ENCODE measurements at regions of chr7 and their contacts with region 1.

Region 1: GRCh38 chr7:122651451-122651850 is 47.5 kb downstream of the RNF133 start:
- DNase-seq: no peak
- ATAC-seq: no peak
- H3K4me3 ChIP-seq: no peak overlapping the region
- H3K27ac ChIP-seq: no peak overlapping the region
- H3K4me1 ChIP-seq: peaks cover 0 to 6% (median 0%) of the 10 kb centered on the region in 12 donors
- H3K27me3 ChIP-seq: no peaks in the 10 kb centered on the region
- CTCF ChIP-seq: no peak
- POLR2A ChIP-seq: no peak

Region 2: GRCh38 chr7:122454776-122455507 is 196.5 kb before region 1 on chr7:
- intact Hi-C with region 1: no loop called
- DNase-seq: no peak
- ATAC-seq: no peak
- H3K4me3 ChIP-seq: no peak overlapping the region
- H3K27ac ChIP-seq: no peak overlapping the region
- H3K4me1 ChIP-seq: no peaks in the 10 kb centered on the region
- H3K27me3 ChIP-seq: no peaks in the 10 kb centered on the region
- CTCF ChIP-seq: no peak
- POLR2A ChIP-seq: no peak

Region 3: GRCh38 chr7:122674502-122674901 is 23.1 kb after region 1 on chr7:
- intact Hi-C with region 1: loop called in 1 of 10 experiments (anchors 2 kb)
- DNase-seq: no peak
- ATAC-seq: peak in 1 of 4 donors; percentile 45
- H3K4me3 ChIP-seq: peak overlapping the region in 2 of 12 donors; percentile 0 to 31
- H3K27ac ChIP-seq: peak overlapping the region in 2 of 12 donors; percentile 24 to 54
- H3K4me1 ChIP-seq: peaks cover 0 to 22% (median 0%) of the 10 kb centered on the region in 12 donors
- H3K27me3 ChIP-seq: no peaks in the 10 kb centered on the region
- CTCF ChIP-seq: no peak
- POLR2A ChIP-seq: no peak

Measured in heart left ventricle (tissue), 16 donors.